ENCODE measurements at regions of chr2 and their contacts with region 1.

Region 1: DNA sequence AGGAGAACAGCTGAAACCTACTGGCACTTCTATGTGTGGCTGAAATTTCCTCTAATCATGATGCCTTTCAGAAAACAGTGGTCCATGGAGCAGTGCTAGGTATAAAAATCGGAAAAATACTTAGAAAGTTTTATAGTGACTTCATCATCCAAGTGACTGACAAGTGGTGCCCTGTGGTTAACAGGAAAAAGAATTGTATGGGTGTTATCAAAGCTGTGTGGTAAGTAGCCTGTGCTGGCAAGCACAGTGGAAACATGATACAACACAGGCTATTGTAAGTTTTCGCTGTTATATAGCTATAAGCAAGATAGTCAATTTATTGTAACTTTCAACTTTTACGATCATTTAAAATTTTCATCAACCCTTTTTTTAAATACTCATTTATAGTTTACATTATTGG is 1599.7 kb upstream of the ZEB2 start:
- DNase-seq: no peak
- H3K4me3 Mint-ChIP-seq: no peak overlapping the region
- H3K27ac Mint-ChIP-seq: no peak overlapping the region
- H3K4me1 Mint-ChIP-seq: no peaks in the 10 kb centered on the region
- H3K27me3 Mint-ChIP-seq: no peaks in the 10 kb centered on the region

Region 2: DNA sequence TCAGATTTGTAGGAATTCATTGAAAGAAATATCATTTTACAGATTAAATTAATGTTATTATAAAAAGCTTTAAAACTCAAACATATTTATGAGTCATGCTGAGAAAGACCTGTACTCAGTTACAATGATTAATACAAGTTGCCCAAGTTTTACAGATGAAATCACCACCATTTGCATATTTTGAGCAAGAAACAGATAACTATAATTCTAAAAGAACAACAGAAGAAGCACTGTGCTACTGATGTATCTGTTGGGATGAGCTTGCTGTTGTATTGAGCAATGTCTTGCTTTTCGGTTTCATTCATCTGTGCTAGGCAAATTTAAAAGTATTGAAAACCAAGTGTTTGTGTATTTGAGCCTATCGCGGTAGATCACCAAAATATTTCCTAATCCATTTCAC is 10.6 kb before region 1 on chr2:
- intact Hi-C with region 1: loop called (anchors 1 kb)
- DNase-seq: no peak
- H3K4me3 Mint-ChIP-seq: no peak overlapping the region
- H3K27ac Mint-ChIP-seq: no peak overlapping the region
- H3K4me1 Mint-ChIP-seq: no peaks in the 10 kb centered on the region
- H3K27me3 Mint-ChIP-seq: no peaks in the 10 kb centered on the region

Region 3: GRCh38 chr2:146135245-146135644 is 15.7 kb after region 1 on chr2:
- intact Hi-C with region 1: no loop called
- DNase-seq: no peak
- H3K4me3 Mint-ChIP-seq: no peak overlapping the region
- H3K27ac Mint-ChIP-seq: no peak overlapping the region
- H3K4me1 Mint-ChIP-seq: no peaks in the 10 kb centered on the region
- H3K27me3 Mint-ChIP-seq: no peaks in the 10 kb centered on the region

Region 4: GRCh38 chr2:146209842-146210275 is 90.3 kb after region 1 on chr2:
- intact Hi-C with region 1: no loop called
- DNase-seq: no peak
- H3K4me3 Mint-ChIP-seq: no peak overlapping the region
- H3K27ac Mint-ChIP-seq: no peak overlapping the region
- H3K4me1 Mint-ChIP-seq: no peaks in the 10 kb centered on the region
- H3K27me3 Mint-ChIP-seq: no peaks in the 10 kb centered on the region

Region 5: GRCh38 chr2:146806299-146807005 is 686.9 kb after region 1 on chr2:
- intact Hi-C with region 1: no loop called
- DNase-seq: no peak
- H3K4me3 Mint-ChIP-seq: no peak overlapping the region
- H3K27ac Mint-ChIP-seq: no peak overlapping the region
- H3K4me1 Mint-ChIP-seq: no peaks in the 10 kb centered on the region
- H3K27me3 Mint-ChIP-seq: peaks cover 1% of the 10 kb centered on the region

Measured in activated T-helper 1 cell treated with anti-CD3 and anti-CD28 coated beads, Interleukin-12 subunit alpha, Interleukin-12 subunit beta, Interleukin-2, Interleukin-4 antibody, amounts not matched to agents 30 ng/mL and 10 ng/mL and 1 ng/mL, durations not matched to agents 14 hours and 24 hours and 36 hours (primary cell).